ENCODE measurements at regions of chr12 and their contacts with region 1.

Region 1: GRCh38 chr12:108514973-108515814 is at the start of gene FICD:
- DNase-seq: peak; percentile 99 to 100
- H3K4me3 ChIP-seq: peak within 1 kb of the TSS; percentile 80 to 97
- H3K27ac ChIP-seq: peak within 1 kb of the TSS; percentile 71 to 76
- H3K4me1 ChIP-seq: peaks cover 6 to 10% of the 10 kb centered on the region in 2 donors
- H3K27me3 ChIP-seq: no peaks in the 10 kb centered on the region
- CTCF ChIP-seq: no peak
- total RNA-seq, gene FICD: 30.8 TPM

Region 2: GRCh38 chr12:107760809-107761501 is 754.2 kb before region 1 on chr12 and contains the start of gene PRDM4:
- intact Hi-C with region 1: loop called (anchors 2 kb)
- DNase-seq: peak; percentile 85 to 98
- H3K4me3 ChIP-seq: peak within 1 kb of the TSS; percentile 71 to 92
- H3K27ac ChIP-seq: peak within 1 kb of the TSS; percentile 57 to 65
- H3K4me1 ChIP-seq: peaks cover 0 to 22% of the 10 kb centered on the region in 2 donors
- H3K27me3 ChIP-seq: no peaks in the 10 kb centered on the region
- CTCF ChIP-seq: peak in 1 of 3 experiments; percentile 39
- total RNA-seq, gene PRDM4: 7.3 TPM

Region 3: DNA sequence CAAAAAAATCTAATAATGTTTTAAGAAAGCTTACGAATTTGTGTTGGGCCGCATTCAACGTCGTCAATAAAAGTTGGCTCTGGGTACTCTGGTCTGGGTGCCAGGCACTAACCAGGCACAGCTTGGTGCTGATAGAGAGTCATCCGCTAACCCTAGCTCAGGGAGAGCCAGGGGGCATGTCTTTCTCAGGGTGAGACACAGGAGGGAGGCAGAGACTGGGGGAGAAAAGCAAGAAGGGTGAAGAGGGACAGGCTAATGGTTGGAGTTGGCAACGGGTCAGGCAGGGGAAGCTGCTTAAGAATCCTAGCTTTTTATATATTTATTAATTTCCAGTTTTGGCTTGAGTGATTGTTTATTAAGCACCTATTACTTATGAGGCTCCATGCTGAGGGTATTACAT is 281.0 kb before region 1 on chr12:
- intact Hi-C with region 1: loop called (anchors 1 kb)
- DNase-seq: no peak
- H3K4me3 ChIP-seq: no peak overlapping the region
- H3K27ac ChIP-seq: no peak overlapping the region
- H3K4me1 ChIP-seq: no peaks in the 10 kb centered on the region
- H3K27me3 ChIP-seq: no peaks in the 10 kb centered on the region
- CTCF ChIP-seq: peak; percentile 45 to 61 (median 56)

Region 4: GRCh38 chr12:108349278-108349688 is 165.9 kb before region 1 on chr12:
- intact Hi-C with region 1: loop called (anchors 10 kb)
- DNase-seq: peak; percentile 16 to 83
- H3K4me3 ChIP-seq: peak overlapping the region in 1 of 2 donors; percentile 5
- H3K27ac ChIP-seq: peak overlapping the region; percentile 77 to 82
- H3K4me1 ChIP-seq: peaks cover 3 to 9% of the 10 kb centered on the region in 2 donors
- H3K27me3 ChIP-seq: no peaks in the 10 kb centered on the region
- CTCF ChIP-seq: no peak

Region 5: DNA sequence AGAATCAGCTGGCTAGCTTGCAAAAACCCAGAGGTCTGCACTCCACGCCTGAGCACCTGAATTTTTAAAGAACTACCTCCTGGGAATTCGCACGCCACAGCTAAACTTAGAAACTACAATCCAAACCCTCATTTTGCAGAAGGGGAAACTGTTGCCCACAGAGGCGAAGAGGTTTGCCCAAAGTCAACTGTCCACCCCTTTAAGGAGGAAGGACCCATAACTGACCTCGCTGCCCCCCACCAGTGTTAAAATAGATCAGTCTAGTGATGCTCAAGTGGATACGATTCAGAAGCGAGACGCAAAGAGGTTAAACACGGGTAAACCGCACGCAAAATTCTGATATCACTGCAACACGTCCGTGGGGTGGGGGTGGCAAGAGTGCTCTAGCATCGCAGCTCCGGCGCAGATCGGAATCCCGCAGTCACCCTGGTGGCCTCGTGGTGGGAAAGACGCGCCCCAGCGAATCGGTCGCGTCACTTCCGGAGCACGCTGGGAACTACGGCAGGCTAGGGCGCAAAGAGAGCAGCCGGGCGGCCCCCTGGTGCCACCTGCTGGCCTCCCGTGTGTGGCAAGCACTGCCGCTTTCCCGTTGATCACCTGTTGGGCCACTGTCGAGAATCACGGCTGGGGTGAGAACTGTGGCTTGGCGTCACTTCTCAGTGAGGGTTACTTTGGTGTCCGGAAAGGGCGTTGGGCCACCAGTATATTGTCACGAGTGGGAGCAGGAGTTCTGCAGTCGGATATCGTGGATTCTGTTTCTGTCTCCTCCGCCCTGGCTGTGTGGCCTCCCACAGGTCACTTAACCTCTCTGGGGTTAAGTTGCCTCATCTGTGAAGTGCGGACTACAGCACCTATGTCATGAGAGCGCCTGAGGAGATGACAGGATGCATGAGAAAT is 578.1 kb after region 1 on chr12 and contains the start of gene ALKBH2:
- intact Hi-C with region 1: loop called (anchors 1 kb)
- DNase-seq: peak; percentile 66 to 97
- H3K4me3 ChIP-seq: peak within 1 kb of the TSS; percentile 52 to 66
- H3K27ac ChIP-seq: peak within 1 kb of the TSS; percentile 54 to 58
- H3K4me1 ChIP-seq: peaks cover 8 to 26% of the 10 kb centered on the region in 2 donors
- H3K27me3 ChIP-seq: no peaks in the 10 kb centered on the region
- CTCF ChIP-seq: peak; percentile 93 to 99 (median 97)
- total RNA-seq, gene ALKBH2: 18.6 TPM

Region 6: GRCh38 chr12:109115758-109116610 is 600.8 kb after region 1 on chr12 and contains the start of gene ACACB:
- intact Hi-C with region 1: no loop called
- DNase-seq: peak; percentile 27 to 77
- H3K4me3 ChIP-seq: no peak within 1 kb of the TSS
- H3K27ac ChIP-seq: peak within 1 kb of the TSS in 1 of 2 donors; percentile 64
- H3K4me1 ChIP-seq: peaks cover 2 to 29% of the 10 kb centered on the region in 2 donors
- H3K27me3 ChIP-seq: no peaks in the 10 kb centered on the region
- CTCF ChIP-seq: no peak
- total RNA-seq, gene ACACB: 140 TPM

Measured in ascending aorta (tissue), 2 donors.